Heart left ventricle (tissue), 16 donors: ENCODE measurements at regions of chr1 and their contacts with region 1.

Region 1: GRCh38 chr1:88800382-88801051 is 90.8 kb downstream of the GTF2B start:
- DNase-seq: peak in 1 of 5 donors; percentile 9
- ATAC-seq: no peak
- H3K4me3 ChIP-seq: no peak overlapping the region
- H3K27ac ChIP-seq: no peak overlapping the region
- H3K4me1 ChIP-seq: peaks cover 0 to 9% (median 0%) of the 10 kb centered on the region in 12 donors
- H3K27me3 ChIP-seq: no peaks in the 10 kb centered on the region
- CTCF ChIP-seq: peak; percentile 42 to 72 (median 54)
- POLR2A ChIP-seq: no peak

Region 2: DNA sequence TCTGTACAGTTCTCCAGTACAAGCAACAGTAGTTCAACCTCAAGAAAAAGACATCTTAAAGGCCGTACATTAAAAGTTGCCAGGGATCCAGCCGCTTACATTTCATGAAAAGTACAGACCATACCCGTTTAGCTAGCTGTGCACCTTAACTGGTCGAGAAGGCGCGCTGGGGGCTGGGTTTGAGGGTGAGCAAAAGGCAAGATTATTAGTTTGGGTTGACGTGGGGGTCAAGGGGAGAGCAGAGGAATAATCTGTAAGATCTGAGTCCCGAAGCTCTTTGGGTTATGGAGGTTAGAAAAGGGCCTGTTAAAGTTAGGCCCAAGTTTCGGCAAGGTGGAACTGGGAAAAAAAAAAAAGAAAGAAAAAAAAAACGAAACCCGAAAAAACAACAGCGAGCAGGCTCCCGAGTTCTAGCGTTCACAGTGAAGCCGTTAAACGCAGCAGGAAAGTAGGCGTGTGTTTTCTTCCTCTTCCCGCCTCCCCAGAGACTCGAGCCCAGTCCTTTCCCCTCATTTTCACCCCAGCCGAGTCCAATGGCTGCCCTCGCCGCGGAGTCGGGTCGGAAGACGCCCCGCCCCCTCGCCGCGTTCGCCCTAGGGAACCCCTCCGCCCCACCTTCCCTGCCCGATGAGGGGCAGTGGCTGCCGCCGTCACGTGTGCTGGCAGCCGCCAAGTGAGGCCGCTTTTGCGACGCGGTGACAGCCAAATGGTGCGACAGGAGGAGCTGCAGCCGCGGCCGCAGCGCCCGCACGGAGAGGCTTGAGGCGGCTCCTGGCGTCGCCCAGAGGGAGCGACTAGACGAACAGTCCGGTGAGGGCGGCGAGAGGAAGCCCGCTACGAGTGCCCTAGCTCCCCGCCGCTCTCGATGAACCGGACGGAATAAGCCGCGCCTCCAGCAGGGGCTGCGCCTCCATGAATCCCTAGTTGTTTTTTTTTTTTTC is 116.7 kb before region 1 on chr1 and contains the start of gene PKN2:
- intact Hi-C with region 1: no loop called
- DNase-seq: peak; percentile 98 to 99 (median 98)
- ATAC-seq: peak; percentile 99 to 100 (median 99)
- H3K4me3 ChIP-seq: peak within 1 kb of the TSS; percentile 70 to 91 (median 86)
- H3K27ac ChIP-seq: peak within 1 kb of the TSS; percentile 86 to 96 (median 94)
- H3K4me1 ChIP-seq: peaks cover 0 to 41% (median 27%) of the 10 kb centered on the region in 12 donors
- H3K27me3 ChIP-seq: no peaks in the 10 kb centered on the region
- CTCF ChIP-seq: peak in 11 of 12 donors; percentile 6 to 58 (median 20)
- POLR2A ChIP-seq: peak; percentile 34 to 90
- total RNA-seq, gene PKN2: 20.3 to 43.8 (median 34.3) TPM

Region 3: DNA sequence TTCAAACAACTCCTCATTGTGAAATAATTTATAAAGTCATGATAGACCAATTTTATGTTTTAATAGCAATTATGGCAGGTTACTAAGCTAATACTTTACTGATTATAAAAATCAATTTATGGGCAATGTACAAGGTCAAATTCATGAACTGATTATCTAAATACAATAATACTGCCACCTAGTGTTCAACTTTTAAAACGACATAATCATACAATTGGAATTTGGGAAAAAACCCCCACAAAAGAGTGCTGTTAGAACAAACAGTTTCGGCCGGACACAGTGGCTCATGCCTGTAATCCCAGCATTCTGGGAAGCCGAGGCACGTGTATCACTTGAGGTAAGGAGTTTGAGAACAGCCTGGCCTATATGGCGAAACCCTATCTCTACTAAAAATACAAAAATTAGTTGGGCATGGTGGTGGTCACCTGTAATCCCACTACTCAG is 76.9 kb after region 1 on chr1:
- intact Hi-C with region 1: loop called in 1 of 10 experiments (anchors 5 kb)
- DNase-seq: no peak
- ATAC-seq: no peak
- H3K4me3 ChIP-seq: no peak overlapping the region
- H3K27ac ChIP-seq: no peak overlapping the region
- H3K4me1 ChIP-seq: peaks cover 0 to 51% (median 16%) of the 10 kb centered on the region in 12 donors
- H3K27me3 ChIP-seq: no peaks in the 10 kb centered on the region
- CTCF ChIP-seq: peak; percentile 45 to 76 (median 64)
- POLR2A ChIP-seq: no peak

Region 4: DNA sequence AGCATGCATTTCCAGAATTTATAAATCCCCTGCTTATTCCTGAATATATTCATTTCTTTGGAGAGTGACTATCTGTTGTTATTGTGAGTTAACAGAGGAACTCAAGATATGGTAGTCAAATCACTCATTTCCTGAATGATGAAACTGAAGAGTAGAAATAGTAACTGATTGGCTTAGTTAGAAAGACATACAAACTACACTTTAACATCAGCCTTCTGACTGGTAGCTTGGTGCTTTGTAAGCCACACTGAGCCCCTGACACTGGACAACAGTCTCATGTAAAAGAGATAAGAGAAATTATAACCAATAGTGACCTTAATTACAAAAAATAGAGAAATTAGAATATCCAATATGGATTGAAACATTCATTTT is 370.5 kb after region 1 on chr1:
- intact Hi-C with region 1: no loop called
- DNase-seq: no peak
- ATAC-seq: no peak
- H3K4me3 ChIP-seq: no peak overlapping the region
- H3K27ac ChIP-seq: no peak overlapping the region
- H3K4me1 ChIP-seq: no peaks in the 10 kb centered on the region
- H3K27me3 ChIP-seq: no peaks in the 10 kb centered on the region
- CTCF ChIP-seq: no peak
- POLR2A ChIP-seq: no peak